ENCODE measurements at regions of chr10 and their contacts with region 1.

Region 1: DNA sequence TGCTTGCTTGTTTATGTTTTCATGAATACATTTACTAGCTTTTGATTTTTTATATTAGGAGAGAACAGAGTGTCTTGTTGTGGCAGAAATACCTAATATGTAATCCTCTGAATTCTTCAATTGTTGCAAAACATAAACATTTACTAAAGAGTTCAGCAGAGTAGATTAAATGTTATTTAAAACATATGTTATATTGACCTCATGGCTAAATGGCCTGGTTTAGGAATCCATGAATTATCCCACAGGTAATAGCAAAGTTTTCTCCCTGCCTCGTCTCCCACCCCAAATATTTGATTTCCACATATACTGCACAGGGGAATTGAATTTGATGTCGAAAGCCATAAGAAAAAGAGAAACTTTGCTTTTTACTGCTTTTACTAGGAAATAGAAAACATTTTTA is 111.8 kb downstream of the ADK start:
- DNase-seq: no peak
- H3K4me3 ChIP-seq: no peak overlapping the region
- H3K27ac ChIP-seq: no peak overlapping the region
- H3K4me1 ChIP-seq: no peaks in the 10 kb centered on the region
- CTCF ChIP-seq: no peak

Region 2: DNA sequence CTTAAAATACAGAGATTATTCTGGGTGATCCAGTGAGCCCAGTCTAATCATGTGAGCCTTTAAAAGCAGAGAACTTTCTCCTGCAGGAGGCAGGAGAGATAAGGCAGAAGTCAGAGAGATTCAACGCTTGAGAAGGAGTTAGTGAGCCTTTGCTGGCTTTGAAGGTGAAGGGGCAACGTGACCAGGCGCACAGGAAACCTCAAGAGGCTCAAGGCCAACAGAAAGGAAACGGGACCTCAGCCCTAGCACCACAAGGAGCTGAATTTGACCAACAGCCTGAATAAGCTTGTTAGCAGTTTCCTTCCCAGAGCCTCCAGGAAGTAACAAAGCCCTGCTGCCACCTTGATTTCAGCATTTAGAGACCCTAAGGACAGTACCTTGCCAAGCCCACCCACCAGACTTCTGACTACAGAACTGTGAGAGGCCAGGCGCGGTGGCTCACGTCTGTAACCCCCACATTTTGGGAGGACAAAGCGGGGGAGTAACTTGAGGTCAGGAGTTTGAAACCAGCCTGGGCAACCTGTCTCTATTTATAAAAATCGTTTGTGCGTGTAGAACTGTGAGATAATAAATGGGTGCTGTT is 476.2 kb after region 1 on chr10:
- CTCF ChIA-PET with region 1: no interaction called
- POLR2A ChIA-PET with region 1: no interaction called
- intact Hi-C with region 1: loop called (anchors 10 kb)
- DNase-seq: peak; percentile 85
- H3K4me3 ChIP-seq: peak overlapping the region; percentile 29
- H3K27ac ChIP-seq: peak overlapping the region; percentile 55
- H3K4me1 ChIP-seq: peaks cover 24% of the 10 kb centered on the region
- CTCF ChIP-seq: peak; percentile 69

Region 3: DNA sequence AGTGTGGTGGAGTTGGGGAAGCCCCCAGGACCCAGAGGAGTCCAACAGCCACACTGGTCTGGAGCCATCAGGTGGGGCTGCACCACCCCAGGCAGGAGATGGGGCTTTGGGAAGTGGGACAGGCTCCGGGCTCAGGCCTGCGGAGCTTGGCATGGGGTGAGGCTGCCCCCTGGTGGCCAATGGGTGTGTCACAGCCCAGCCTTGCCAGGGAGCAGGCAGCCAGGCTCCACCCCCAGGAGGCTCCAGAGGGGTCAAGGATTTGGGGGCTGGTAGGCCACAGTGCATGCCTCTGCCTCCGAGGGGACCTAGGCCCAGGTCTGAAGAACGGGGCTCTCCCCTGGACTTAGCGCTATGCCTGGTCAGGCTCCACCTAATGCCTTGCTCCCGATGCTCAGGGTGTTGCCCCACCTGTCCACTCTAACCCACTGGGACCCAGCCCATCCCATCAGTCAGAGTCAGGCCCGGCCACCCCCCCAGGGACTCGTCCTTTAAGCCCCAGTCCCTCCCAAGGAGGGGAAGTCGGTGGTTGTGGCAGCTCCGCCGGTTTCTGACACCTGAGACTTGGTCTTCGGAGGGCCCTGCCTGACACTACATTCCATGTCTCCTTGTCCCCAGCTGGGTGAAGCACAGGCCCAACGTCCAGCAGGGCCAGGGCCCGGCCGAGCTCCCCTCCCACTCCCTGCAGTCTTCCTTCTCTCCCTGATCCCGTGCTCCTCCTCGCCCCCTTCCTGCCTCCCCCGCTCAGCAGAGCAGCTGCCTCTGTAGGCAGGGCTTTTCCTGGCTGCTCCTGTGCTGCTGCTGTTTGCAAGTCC is 837.3 kb after region 1 on chr10:
- CTCF ChIA-PET with region 1: no interaction called
- POLR2A ChIA-PET with region 1: no interaction called
- intact Hi-C with region 1: loop called (anchors 1 kb)
- DNase-seq: peak; percentile 70
- H3K4me3 ChIP-seq: no peak overlapping the region
- H3K27ac ChIP-seq: no peak overlapping the region
- H3K4me1 ChIP-seq: no peaks in the 10 kb centered on the region
- CTCF ChIP-seq: peak; percentile 92

Measured in OCI-LY7 (cell line).